Heart left ventricle (tissue), 16 donors: ENCODE measurements at regions of chr5 and their contacts with region 1.

Region 1: DNA sequence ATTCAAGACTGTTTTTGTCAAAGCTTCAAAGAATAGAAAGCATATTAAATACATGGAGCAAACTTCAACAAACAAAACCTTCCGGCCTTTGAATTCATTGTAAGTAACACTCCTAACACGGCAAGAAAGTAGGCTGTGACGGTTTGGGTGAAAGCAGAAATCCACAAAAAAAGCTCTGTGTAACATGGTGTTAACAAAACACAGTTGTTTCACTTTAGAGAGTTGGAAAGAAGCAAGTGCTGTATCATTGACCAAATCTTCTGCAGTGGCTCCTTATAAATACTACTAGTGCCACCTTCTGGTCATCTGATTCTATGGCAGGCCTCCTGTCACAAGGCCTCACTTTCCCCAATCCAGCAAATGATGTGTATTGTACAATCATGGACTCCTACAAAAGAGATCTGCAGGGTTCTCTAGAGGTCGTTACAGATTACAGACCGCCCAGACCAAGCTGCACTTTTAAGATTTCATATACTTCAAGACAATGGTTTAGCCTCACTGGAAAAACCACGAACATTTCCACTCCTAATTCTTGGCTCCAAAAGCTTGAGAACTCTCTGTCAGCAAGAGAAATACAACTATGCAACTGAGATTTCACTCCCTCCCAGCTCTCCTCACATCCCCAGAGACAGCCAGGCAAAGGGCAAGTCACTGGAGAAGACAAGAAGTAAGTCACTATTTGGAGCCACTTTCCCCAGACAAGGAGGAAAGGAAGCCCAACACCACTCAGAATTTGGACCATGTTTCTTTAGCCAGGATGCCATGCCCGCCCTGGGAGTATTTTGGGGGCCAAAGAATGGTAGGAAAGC is 196.2 kb downstream of the DTWD2 start:
- DNase-seq: peak in 1 of 5 donors; percentile 33
- ATAC-seq: peak; percentile 58 to 92 (median 85)
- H3K4me3 ChIP-seq: peak overlapping the region in 4 of 12 donors; percentile 13 to 35 (median 22)
- H3K27ac ChIP-seq: peak overlapping the region in 2 of 12 donors; percentile 37 to 52
- H3K4me1 ChIP-seq: peaks cover 0 to 12% (median 7%) of the 10 kb centered on the region in 12 donors
- H3K27me3 ChIP-seq: no peaks in the 10 kb centered on the region
- CTCF ChIP-seq: peak; percentile 65 to 90 (median 79)
- POLR2A ChIP-seq: no peak

Region 2: DNA sequence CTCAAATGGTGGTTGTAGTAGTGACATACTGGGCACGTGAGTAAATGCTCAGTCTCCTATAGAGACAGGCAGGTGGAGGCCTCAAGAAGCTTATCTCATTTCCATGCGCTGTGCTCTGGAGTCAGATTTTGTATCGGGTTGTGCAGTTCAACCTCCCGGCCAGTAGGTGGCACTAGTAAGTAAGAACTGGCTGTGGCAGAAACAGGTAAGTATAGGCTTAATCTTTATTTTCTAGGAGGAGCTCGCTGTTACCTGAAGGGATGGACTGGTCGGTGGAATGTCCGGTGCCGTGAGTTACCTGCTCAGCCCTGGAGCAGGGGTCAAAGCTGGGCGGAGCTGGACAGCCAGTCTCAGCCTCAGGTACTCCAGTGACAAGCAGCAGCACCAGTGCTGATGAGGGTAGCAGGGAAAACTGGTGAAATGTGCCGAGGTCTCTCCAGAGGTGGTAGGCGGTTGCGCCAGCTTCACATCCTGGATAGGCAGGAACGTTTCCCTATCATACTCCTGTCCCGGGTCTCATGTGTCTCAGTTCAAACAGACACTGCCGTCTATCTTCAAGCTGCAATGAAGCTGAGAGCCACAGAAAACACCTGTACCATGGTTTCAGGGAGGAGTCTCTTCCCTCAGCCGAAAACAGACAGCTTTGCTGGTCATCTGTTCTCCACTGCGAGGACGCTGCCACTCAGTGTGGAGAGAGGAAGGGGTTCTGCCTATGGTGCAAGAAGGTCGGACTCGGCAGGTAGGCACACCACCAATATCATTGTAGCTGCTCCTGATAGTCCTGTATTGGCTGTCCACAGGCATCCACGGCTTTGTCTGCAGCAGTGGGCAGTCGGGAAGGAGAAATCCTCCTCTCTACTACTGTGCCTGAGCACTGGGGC is 1337.2 kb before region 1 on chr5:
- intact Hi-C with region 1: loop called in 8 of 10 experiments (anchors 2 to 10 kb)
- DNase-seq: peak in 3 of 5 donors; percentile 13 to 45 (median 23)
- ATAC-seq: peak in 3 of 4 donors; percentile 32 to 71 (median 59)
- H3K4me3 ChIP-seq: peak overlapping the region in 4 of 12 donors; percentile 7 to 30 (median 20)
- H3K27ac ChIP-seq: no peak overlapping the region
- H3K4me1 ChIP-seq: peaks cover 0 to 10% (median 0%) of the 10 kb centered on the region in 12 donors
- H3K27me3 ChIP-seq: peaks cover 0 to 3% (median 0%) of the 10 kb centered on the region in 9 donors
- CTCF ChIP-seq: peak; percentile 64 to 82 (median 75)
- POLR2A ChIP-seq: no peak

Region 3: GRCh38 chr5:117590944-117591343 is 1201.2 kb before region 1 on chr5:
- intact Hi-C with region 1: loop called in 1 of 10 experiments (anchors 5 kb)
- DNase-seq: no peak
- ATAC-seq: no peak
- H3K4me3 ChIP-seq: no peak overlapping the region
- H3K27ac ChIP-seq: no peak overlapping the region
- H3K4me1 ChIP-seq: no peaks in the 10 kb centered on the region
- H3K27me3 ChIP-seq: no peaks in the 10 kb centered on the region
- CTCF ChIP-seq: peak in 10 of 12 donors; percentile 15 to 57 (median 48)
- POLR2A ChIP-seq: no peak

Region 4: DNA sequence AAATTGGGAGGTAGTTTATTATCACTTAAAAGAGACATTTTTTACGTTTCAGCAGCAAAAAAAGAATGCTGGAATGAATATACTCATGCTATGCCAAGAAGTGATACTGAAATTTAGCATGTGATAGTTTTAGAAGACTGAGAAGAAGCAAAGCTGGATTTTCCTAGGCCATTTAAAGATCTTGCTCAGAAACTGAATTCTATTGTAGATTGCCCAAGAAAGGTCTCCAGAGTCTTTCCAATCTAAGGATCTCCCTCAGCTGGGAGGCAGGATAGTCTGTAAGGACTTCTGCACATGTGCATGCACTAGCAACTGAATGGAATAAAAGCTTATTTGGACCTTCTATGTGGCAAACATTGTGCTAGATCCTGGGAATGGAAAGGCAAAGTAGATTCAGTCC is 138.3 kb before region 1 on chr5:
- intact Hi-C with region 1: no loop called
- DNase-seq: no peak
- ATAC-seq: no peak
- H3K4me3 ChIP-seq: no peak overlapping the region
- H3K27ac ChIP-seq: no peak overlapping the region
- H3K4me1 ChIP-seq: no peaks in the 10 kb centered on the region
- H3K27me3 ChIP-seq: no peaks in the 10 kb centered on the region
- CTCF ChIP-seq: no peak
- POLR2A ChIP-seq: no peak

Region 5: GRCh38 chr5:118705959-118706667 is 86.0 kb before region 1 on chr5:
- intact Hi-C with region 1: no loop called
- DNase-seq: no peak
- ATAC-seq: no peak
- H3K4me3 ChIP-seq: no peak overlapping the region
- H3K27ac ChIP-seq: no peak overlapping the region
- H3K4me1 ChIP-seq: no peaks in the 10 kb centered on the region
- H3K27me3 ChIP-seq: no peaks in the 10 kb centered on the region
- CTCF ChIP-seq: no peak
- POLR2A ChIP-seq: no peak

Region 6: DNA sequence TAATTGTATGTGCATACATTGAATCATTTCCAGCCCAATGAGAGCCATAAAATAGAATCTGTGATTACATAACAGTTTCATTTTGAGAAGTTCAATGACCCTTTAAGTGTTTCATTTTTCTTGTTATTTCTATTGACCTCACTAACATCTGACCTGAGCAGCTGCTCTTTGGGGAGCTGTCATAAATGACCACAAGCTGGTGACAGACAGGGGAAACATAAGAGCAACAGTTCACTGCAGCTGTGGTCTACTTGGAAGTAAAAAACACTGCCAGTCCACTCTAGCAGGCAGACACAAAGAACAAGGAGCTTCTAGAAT is 69.2 kb before region 1 on chr5:
- intact Hi-C with region 1: no loop called
- DNase-seq: no peak
- ATAC-seq: no peak
- H3K4me3 ChIP-seq: no peak overlapping the region
- H3K27ac ChIP-seq: no peak overlapping the region
- H3K4me1 ChIP-seq: no peaks in the 10 kb centered on the region
- H3K27me3 ChIP-seq: no peaks in the 10 kb centered on the region
- CTCF ChIP-seq: no peak
- POLR2A ChIP-seq: no peak

Region 7: DNA sequence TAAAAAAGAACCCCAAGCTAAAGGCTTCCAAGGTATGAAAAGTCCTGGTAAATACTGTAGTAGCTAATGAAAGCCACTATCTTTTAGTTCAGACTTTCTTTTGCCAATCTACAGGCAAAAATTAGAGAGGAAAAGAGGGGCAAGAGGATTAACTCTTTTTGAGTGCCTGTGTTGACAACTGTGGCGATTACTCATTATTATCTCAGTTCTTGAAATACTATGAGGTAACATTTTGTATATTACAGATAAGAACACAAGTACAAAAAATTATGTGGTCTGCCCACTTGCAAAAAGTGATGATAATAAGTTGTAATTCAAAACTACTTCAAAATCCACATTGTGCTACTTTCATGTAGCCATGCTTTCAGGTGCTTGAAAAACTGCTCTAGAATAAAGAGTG is 52.2 kb after region 1 on chr5:
- intact Hi-C with region 1: no loop called
- DNase-seq: no peak
- ATAC-seq: no peak
- H3K4me3 ChIP-seq: no peak overlapping the region
- H3K27ac ChIP-seq: no peak overlapping the region
- H3K4me1 ChIP-seq: no peaks in the 10 kb centered on the region
- H3K27me3 ChIP-seq: no peaks in the 10 kb centered on the region
- CTCF ChIP-seq: no peak
- POLR2A ChIP-seq: no peak